ENCODE measurements at regions of chr2 and their contacts with region 1.

Region 1: GRCh38 chr2:21118302-21118920 is 5.4 kb upstream of the TDRD15 start:
- DNase-seq: peak in 1 of 2 donors; percentile 63
- H3K4me3 ChIP-seq: no peak overlapping the region
- H3K27ac ChIP-seq: no peak overlapping the region
- H3K4me1 ChIP-seq: no peaks in the 10 kb centered on the region
- H3K27me3 ChIP-seq: no peaks in the 10 kb centered on the region
- CTCF ChIP-seq: peak; percentile 37 to 66 (median 55)

Region 2: DNA sequence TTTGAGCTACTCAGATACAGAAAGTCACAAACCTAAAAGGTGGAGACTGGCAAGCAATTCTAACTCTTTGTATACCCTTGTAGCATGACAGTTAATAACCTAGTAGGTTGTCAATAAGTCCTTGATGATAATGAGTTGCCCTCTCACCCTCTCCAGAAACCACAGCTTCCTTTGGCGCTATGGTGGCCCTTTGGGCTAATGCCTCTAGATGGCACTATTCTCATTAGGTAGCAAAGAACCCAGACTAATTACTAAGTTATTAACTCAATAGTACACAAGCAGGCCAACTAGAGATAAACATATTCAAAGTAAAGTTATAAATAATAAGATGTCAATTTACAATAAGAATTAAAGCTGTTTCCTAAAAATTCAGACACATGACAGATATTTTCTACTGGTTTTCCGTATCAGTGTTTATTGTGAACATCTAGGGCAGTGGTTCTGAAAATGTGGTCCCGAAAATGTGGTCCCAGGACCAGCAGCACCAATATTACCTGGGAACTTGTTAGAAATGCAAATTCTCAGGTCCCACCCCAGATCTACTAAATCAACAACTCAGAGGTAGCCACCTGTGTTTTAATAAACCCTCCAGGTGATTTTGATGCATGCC is 336.6 kb before region 1 on chr2:
- intact Hi-C with region 1: loop called (anchors 2 kb)
- DNase-seq: no peak
- H3K4me3 ChIP-seq: no peak overlapping the region
- H3K27ac ChIP-seq: no peak overlapping the region
- H3K4me1 ChIP-seq: no peaks in the 10 kb centered on the region
- H3K27me3 ChIP-seq: no peaks in the 10 kb centered on the region
- CTCF ChIP-seq: peak; percentile 20 to 64 (median 56)

Region 3: DNA sequence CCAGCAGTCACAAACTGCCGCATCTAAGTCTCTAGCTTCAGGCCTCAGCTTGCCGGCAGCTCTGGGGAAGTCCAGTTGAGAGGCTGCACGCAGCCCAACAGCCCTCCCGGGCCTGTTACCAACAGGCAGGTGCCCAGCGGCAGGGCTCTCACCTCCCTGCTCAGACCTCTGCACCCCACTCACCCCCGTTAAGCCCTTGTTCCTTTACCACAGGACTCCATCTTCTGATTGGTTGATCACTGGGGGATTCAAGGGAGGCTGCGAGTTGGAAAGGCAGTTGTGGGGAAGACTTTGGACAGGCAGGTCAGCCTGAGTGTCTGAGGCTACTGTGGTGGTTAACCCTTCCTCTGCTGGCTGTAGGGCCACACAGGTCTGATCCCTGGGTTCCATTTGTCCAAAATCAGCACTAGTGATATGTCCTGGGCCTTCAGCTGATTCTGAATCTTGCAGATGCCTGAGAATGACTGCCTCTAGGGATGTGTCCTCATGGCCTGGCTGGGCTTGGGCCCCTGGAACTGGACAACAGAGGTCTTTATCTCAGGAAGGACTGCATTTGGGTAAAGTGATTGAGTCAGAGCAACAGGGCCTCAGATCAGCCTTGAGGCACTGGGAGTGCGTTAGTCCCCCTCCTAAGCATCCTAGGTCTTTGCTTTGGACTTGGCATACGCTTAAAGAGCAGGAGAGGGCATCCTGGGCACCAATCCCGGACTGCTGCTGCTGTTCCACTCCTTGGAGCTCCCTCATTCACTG is 163.0 kb before region 1 on chr2:
- intact Hi-C with region 1: no loop called
- DNase-seq: no peak
- H3K4me3 ChIP-seq: no peak overlapping the region
- H3K27ac ChIP-seq: no peak overlapping the region
- H3K4me1 ChIP-seq: no peaks in the 10 kb centered on the region
- H3K27me3 ChIP-seq: no peaks in the 10 kb centered on the region
- CTCF ChIP-seq: no peak

Region 4: GRCh38 chr2:21103274-21103891 is 15.0 kb before region 1 on chr2:
- intact Hi-C with region 1: no loop called
- DNase-seq: no peak
- H3K4me3 ChIP-seq: no peak overlapping the region
- H3K27ac ChIP-seq: no peak overlapping the region
- H3K4me1 ChIP-seq: peaks cover 0 to 8% of the 10 kb centered on the region in 2 donors
- H3K27me3 ChIP-seq: no peaks in the 10 kb centered on the region
- CTCF ChIP-seq: no peak

Region 5: DNA sequence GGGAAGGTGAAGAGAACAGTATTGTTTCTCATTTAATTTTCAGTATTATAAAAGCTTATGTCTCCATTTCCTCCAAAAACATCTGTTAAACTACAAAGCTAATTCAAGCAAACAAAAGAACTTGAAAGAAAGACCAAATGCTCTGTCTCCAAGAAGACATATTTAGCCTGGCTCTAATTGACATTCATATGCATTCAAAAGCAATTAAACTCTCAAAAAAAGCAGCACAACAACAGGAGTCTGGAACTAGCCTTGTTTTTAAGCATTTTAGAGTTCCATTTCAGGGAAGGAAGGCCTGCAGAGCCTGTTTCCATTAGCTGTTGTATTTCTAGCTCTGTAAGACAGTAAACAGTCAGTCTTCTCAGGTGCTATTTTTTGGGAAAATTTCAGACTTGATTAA is 453.3 kb after region 1 on chr2:
- intact Hi-C with region 1: no loop called
- DNase-seq: no peak
- H3K4me3 ChIP-seq: no peak overlapping the region
- H3K27ac ChIP-seq: no peak overlapping the region
- H3K4me1 ChIP-seq: no peaks in the 10 kb centered on the region
- H3K27me3 ChIP-seq: no peaks in the 10 kb centered on the region
- CTCF ChIP-seq: no peak

Measured in ascending aorta (tissue), 2 donors.